ENCODE measurements at regions of chr10 and their contacts with region 1.

Region 1: GRCh38 chr10:91163269-91163868 is 57.1 kb upstream of the PCGF5 start:
- DNase-seq: peak; percentile 75
- H3K4me3 Mint-ChIP-seq: peak overlapping the region; percentile 80
- H3K27ac Mint-ChIP-seq: peak overlapping the region; percentile 78
- H3K4me1 Mint-ChIP-seq: peaks cover 33% of the 10 kb centered on the region
- H3K27me3 Mint-ChIP-seq: no peaks in the 10 kb centered on the region

Region 2: DNA sequence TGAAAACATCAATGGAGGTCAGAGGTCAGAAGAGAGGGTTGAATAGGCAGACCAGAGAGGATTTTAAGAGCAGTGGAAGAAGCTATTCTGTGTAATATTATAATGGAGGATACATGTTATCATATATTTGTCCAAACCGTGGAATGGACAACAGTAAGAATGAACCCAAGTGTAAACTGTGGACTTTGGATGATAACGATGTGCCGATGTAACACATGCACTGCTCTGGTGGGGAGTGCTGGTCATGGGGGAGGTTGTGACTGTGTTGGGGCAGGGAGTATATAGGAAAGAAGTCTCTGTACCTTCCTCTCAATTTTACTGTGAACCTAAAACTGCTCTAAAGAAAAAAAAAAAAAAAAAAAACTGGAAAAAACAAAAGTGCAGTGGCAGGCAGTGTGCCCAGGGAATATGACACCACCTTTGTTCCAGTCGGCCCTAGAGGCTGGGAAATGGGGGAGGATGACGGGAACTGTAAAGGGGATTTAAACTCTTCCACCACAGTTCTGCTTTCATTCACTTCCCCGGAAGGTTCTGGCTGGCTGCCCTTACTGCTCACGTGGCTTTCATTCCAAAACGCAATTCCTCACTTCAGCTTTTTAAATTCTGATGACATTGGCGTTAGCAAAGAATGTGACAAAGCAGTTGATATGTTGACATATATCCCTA is 128.7 kb before region 1 on chr10:
- CTCF ChIA-PET with region 1: no interaction called
- intact Hi-C with region 1: loop called (anchors 5 kb)
- DNase-seq: no peak
- H3K4me3 Mint-ChIP-seq: no peak overlapping the region
- H3K27ac Mint-ChIP-seq: peak overlapping the region; percentile 57
- H3K4me1 Mint-ChIP-seq: peaks cover 15% of the 10 kb centered on the region
- H3K27me3 Mint-ChIP-seq: no peaks in the 10 kb centered on the region

Region 3: DNA sequence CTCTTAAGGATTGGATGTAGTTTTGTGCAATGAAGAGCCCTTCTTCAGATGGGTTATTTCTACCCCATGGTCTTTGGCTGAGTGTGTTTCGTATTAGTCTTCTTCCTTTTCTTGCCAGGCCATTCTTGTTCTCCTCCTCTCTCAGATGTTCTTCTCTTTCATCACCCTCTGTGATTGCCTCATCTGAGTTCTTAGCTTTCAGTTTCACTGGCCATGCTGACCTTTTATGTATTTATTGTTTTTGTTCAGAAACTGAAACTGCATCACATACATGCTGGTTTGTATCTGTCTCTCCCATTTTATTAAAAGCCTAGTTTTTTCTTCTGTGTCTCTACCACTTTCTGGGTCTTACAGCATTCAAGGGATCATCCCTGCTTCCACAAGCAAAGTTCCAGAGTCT is 35.4 kb after region 1 on chr10:
- CTCF ChIA-PET with region 1: no interaction called
- intact Hi-C with region 1: loop called (anchors 1 kb)
- DNase-seq: peak; percentile 37
- H3K4me3 Mint-ChIP-seq: no peak overlapping the region
- H3K27ac Mint-ChIP-seq: peak overlapping the region; percentile 13
- H3K4me1 Mint-ChIP-seq: peaks cover 77% of the 10 kb centered on the region
- H3K27me3 Mint-ChIP-seq: no peaks in the 10 kb centered on the region

Region 4: GRCh38 chr10:91220194-91220953 is 57.0 kb after region 1 on chr10 and contains the start of gene PCGF5:
- CTCF ChIA-PET with region 1: interaction called, 3 read pairs
- intact Hi-C with region 1: loop called (anchors 1 kb)
- DNase-seq: peak; percentile 89
- H3K4me3 Mint-ChIP-seq: peak within 1 kb of the TSS; percentile 80
- H3K27ac Mint-ChIP-seq: peak within 1 kb of the TSS; percentile 22
- H3K4me1 Mint-ChIP-seq: peaks cover 33% of the 10 kb centered on the region
- H3K27me3 Mint-ChIP-seq: no peaks in the 10 kb centered on the region
- total RNA-seq, gene PCGF5: 34.2 to 36.4 TPM

Region 5: DNA sequence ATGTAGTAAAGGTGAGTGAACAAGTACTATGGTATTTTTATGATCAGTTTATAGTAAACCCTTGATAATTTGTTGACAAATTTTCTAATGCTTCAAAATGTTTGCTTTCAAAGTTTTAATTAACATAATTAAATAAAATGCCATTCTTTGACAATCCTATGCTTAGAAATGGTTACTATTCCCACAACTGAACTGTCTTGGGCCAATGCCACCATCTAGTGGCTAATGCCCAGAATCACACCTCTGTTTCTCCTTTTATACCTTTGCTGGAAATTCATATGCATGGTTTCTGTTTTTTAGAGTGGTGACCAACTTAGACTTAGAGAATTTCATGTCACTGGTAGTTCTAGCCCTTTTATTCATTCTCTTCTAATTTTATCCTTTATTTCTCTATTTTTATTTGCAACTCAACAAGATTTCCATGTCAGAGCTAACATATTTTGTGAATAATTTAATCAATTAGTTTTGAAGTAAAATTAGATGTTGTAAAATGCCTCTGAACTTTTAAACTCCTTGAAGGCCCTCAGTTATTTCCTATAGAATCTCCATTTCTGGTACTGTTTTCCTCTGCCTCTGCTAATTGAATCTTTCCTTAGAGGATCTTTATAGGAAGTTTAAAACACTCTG is 88.2 kb after region 1 on chr10:
- CTCF ChIA-PET with region 1: interaction called, 12 read pairs
- intact Hi-C with region 1: no loop called
- DNase-seq: peak; percentile 70
- H3K4me3 Mint-ChIP-seq: no peak overlapping the region
- H3K27ac Mint-ChIP-seq: no peak overlapping the region
- H3K4me1 Mint-ChIP-seq: peaks cover 3% of the 10 kb centered on the region
- H3K27me3 Mint-ChIP-seq: no peaks in the 10 kb centered on the region

Region 6: DNA sequence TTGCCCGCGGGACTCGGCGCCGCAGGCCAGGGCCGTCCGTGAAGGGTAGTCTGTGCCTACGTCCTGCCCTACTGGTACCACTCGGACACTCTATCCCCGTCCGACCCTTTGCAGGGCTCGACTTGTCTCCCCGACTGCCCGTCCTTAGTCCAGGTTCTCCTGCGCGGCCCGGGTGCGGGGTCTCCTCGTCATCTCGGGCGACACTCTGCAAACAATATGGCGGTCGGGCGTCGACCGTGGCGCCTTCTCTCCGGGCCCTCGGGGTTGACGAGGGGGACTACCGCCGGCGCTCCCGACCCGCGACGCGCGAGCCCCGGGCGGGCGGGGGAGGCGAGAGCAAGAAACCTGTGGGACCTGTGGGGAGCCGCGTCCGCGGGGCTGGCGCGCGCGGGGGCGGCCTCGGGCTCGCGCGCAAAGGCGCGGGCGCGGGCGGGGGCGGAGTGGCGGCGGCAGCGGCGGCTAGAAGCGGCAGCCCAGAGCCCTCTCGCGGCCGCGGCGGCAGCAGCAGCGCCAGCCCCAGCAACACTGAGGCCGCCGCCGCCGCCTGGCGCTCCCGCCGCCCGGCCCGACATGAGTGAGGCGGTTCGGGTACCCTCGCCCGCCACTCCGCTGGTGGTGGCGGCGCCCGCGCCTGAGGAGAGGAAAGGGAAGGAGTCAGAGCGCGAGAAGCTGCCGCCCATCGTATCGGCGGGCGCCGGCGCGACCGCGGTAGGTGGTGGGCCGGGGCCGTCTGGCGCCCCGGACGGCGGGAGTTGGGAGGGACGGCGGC is 246.7 kb after region 1 on chr10 and contains the start of gene HECTD2:
- CTCF ChIA-PET with region 1: no interaction called
- intact Hi-C with region 1: loop called (anchors 1 kb)
- DNase-seq: peak; percentile 77
- H3K4me3 Mint-ChIP-seq: peak within 1 kb of the TSS; percentile 83
- H3K27ac Mint-ChIP-seq: peak within 1 kb of the TSS; percentile 88
- H3K4me1 Mint-ChIP-seq: peaks cover 15% of the 10 kb centered on the region
- H3K27me3 Mint-ChIP-seq: peaks cover 12% of the 10 kb centered on the region
- total RNA-seq, gene HECTD2: 2.3 to 3.1 TPM

Region 7: DNA sequence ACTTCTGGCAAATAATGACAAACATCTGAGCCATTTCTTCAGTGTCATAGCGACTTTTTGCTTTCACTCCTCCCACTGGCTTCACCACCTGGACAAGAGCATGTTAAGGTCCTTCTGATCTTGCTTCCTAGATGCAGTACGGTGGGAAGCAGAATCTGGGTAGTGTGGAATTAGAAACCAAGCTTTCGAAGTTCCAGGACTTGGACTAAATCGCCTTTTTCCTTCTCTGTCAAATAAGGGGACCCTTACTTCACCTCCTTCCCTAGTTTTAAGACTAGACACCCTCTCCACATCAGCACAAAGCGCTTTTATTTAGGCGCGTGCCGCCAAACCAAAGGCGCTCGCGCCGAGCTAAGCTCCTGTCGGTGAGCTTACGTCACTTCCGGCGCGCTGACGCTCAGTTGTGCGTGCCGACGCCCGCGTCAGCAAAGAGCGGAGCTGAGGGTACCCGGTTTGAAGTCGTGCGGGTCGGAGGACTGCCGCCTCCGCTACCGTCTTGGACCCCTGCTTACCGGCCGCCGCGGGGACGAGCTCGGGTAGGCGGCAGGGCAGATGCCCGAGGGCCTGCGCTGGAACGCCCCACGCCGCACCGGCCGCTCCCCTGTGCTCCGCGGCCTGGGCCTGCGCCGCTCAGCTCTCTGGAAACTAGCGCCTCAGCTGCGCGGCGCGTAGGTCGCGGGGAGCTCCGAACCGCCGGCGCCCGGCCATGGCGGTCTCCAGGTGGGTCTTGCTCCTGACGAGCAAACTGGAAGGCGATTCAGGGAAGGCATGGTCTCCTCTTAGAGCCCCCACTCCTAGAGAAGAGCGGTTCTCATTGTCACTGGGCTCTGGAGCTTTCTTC is 760.2 kb after region 1 on chr10 and contains the start of gene BTAF1:
- CTCF ChIA-PET with region 1: no interaction called
- intact Hi-C with region 1: loop called (anchors 5 kb)
- DNase-seq: peak; percentile 93
- H3K4me3 Mint-ChIP-seq: peak within 1 kb of the TSS; percentile 86
- H3K27ac Mint-ChIP-seq: peak within 1 kb of the TSS; percentile 99
- H3K4me1 Mint-ChIP-seq: peaks cover 35% of the 10 kb centered on the region
- H3K27me3 Mint-ChIP-seq: no peaks in the 10 kb centered on the region
- total RNA-seq, gene BTAF1: 42.6 to 43.6 TPM

Measured in activated naive CD4-positive, alpha-beta T cell treated with anti-CD3 and anti-CD28 coated beads for 36 hours (primary cell).